Naive thymus-derived CD4-positive, alpha-beta T cell (primary cell): ENCODE measurements at regions of chr16 and their contacts with region 1.

Region 1: DNA sequence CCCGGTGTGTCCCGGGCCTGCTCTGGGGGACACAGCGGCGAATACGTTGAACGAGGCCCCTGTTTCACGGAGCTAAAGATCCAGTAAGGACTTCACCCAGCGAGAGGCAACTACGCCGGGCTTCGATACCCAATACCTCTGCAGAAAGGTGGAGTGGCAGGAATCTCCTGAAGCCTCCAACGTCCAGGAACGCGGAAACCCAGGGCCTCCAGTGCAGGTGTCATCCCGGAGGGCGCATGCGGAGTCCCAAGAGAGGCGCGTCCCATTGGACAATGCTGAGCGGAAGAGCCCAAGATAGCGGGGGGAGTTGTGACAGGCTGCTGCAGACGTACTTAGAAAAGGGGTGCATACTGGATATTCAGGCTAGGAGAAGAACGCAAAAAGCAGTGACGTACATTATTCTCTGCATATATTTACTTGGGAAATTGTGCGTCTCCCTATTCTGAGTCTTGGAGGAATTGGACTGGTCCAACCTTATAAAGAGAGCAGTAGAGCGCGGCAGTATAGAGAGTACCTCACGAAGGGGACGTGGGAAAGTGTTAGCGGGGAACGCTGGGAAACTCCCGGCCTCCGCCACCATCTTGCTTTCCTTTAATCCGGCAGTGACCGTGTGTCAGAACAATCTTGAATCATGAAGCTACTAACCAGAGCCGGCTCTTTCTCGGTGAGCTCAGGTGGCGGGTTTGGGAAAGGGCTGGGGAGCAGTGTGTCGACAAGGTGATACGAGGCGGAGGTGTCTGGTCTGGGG is at the start of gene UQCRC2:
- DNase-seq: peak; percentile 76 to 92 (median 89)
- ATAC-seq: peak; percentile 94
- H3K4me3 ChIP-seq: peak within 1 kb of the TSS; percentile 81
- H3K4me3 Mint-ChIP-seq: peak within 1 kb of the TSS; percentile 94 to 100 (median 99)
- H3K27ac ChIP-seq: peak within 1 kb of the TSS; percentile 97
- H3K27ac Mint-ChIP-seq: peak within 1 kb of the TSS; percentile 96 to 99 (median 98)
- H3K4me1 ChIP-seq: peaks cover 30 to 33% of the 10 kb centered on the region in 2 donors
- H3K4me1 Mint-ChIP-seq: peaks cover 34 to 86% (median 68%) of the 10 kb centered on the region in 7 donors
- H3K27me3 ChIP-seq: no peaks in the 10 kb centered on the region
- H3K27me3 Mint-ChIP-seq: no peaks in the 10 kb centered on the region
- total RNA-seq, gene UQCRC2: 158 to 227 (median 180) TPM

Region 2: GRCh38 chr16:21523411-21524067 is 429.4 kb before region 1 on chr16:
- CTCF ChIA-PET with region 1: no interaction called
- POLR2A ChIA-PET with region 1: no interaction called
- intact Hi-C with region 1: loop called in 1 of 2 experiments (anchors 1 kb)
- DNase-seq: no peak
- ATAC-seq: no peak
- H3K4me3 ChIP-seq: no peak overlapping the region
- H3K4me3 Mint-ChIP-seq: peak overlapping the region in 2 of 10 donors; percentile 29 to 56
- H3K27ac ChIP-seq: no peak overlapping the region
- H3K27ac Mint-ChIP-seq: no peak overlapping the region
- H3K4me1 ChIP-seq: no peaks in the 10 kb centered on the region
- H3K4me1 Mint-ChIP-seq: peaks cover 2 to 9% (median 6%) of the 10 kb centered on the region in 7 donors
- H3K27me3 ChIP-seq: no peaks in the 10 kb centered on the region
- H3K27me3 Mint-ChIP-seq: peaks cover 0 to 7% (median 0%) of the 10 kb centered on the region in 5 donors

Region 3: DNA sequence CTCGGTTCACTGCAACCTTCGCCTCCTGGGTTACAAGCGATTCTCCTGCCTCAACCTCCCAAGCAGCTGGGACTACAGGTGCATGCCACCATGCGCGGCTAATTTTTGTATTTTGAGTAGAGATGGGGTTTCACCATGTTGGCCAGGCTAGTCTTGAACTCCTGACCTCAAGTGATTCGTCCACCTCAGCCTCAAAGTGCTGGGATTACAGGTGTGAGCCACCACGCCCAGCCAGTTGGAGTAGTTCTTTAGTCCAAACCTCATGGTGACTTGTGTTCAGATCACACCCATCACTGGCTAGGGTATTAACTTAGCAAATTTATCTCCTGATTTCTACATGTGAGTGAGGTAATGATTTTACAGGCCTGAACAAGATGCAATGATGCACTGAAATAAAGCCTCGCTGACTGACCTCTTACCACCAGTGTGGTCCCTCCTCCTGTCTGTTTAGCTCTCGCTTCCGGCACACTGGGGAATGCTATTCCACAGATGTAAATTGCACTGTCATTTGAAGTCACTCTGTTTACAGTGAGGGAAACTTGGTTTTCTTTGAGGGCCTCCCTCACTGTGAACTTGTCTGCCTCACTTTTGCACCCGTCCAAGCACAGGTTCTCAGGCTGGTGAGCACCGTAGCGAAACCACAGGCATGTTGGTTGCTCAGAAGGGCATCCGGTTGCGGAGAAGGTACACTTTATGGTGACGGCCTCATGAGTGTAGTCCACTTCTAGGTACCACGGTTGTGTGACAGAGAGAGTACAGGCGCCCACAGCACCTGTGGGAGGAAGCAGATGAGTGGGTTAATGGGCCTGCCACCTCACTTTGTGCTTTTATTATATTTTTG is 306.0 kb before region 1 on chr16:
- CTCF ChIA-PET with region 1: no interaction called
- POLR2A ChIA-PET with region 1: no interaction called
- intact Hi-C with region 1: loop called in 1 of 2 experiments (anchors 1 kb)
- DNase-seq: peak in 8 of 9 donors; percentile 66 to 79 (median 71)
- ATAC-seq: peak; percentile 83
- H3K4me3 ChIP-seq: peak overlapping the region; percentile 57
- H3K4me3 Mint-ChIP-seq: peak overlapping the region; percentile 69 to 90 (median 81)
- H3K27ac ChIP-seq: peak overlapping the region; percentile 77
- H3K27ac Mint-ChIP-seq: peak overlapping the region; percentile 91 to 97 (median 95)
- H3K4me1 ChIP-seq: peaks cover 43 to 50% of the 10 kb centered on the region in 2 donors
- H3K4me1 Mint-ChIP-seq: peaks cover 26 to 69% (median 56%) of the 10 kb centered on the region in 7 donors
- H3K27me3 ChIP-seq: no peaks in the 10 kb centered on the region
- H3K27me3 Mint-ChIP-seq: no peaks in the 10 kb centered on the region

Region 4: DNA sequence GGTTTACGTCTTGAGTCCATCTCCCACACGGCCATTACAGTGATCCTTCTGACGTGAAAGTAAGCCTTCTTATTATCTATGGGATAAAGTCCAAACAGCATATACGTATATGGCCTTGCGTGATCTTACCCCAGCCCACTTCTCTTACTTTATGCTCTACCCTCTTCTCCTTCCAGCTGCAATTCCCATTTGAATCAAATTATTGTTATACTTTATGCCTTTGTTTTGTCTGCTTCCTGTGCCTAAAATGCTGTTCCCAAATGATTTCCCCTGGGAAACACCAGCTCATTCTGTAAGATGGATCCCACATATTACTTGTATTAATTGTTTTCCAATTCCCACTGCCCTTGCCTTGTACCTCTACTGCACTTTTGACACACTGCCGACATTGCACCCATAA is 11.4 kb after region 1 on chr16:
- CTCF ChIA-PET with region 1: no interaction called
- POLR2A ChIA-PET with region 1: interaction called, 12 read pairs
- intact Hi-C with region 1: no loop called
- DNase-seq: no peak
- ATAC-seq: no peak
- H3K4me3 ChIP-seq: no peak overlapping the region
- H3K4me3 Mint-ChIP-seq: no peak overlapping the region
- H3K27ac ChIP-seq: no peak overlapping the region
- H3K27ac Mint-ChIP-seq: peak overlapping the region in 1 of 9 donors; percentile 20
- H3K4me1 ChIP-seq: no peaks in the 10 kb centered on the region
- H3K4me1 Mint-ChIP-seq: peaks cover 0 to 6% (median 1%) of the 10 kb centered on the region in 7 donors
- H3K27me3 ChIP-seq: no peaks in the 10 kb centered on the region
- H3K27me3 Mint-ChIP-seq: no peaks in the 10 kb centered on the region

Region 5: GRCh38 chr16:22014271-22014873 is 61.4 kb after region 1 on chr16:
- CTCF ChIA-PET with region 1: no interaction called
- POLR2A ChIA-PET with region 1: no interaction called
- intact Hi-C with region 1: no loop called
- DNase-seq: no peak
- ATAC-seq: no peak
- H3K4me3 ChIP-seq: no peak overlapping the region
- H3K4me3 Mint-ChIP-seq: no peak overlapping the region
- H3K27ac ChIP-seq: no peak overlapping the region
- H3K27ac Mint-ChIP-seq: peak overlapping the region in 1 of 9 donors; percentile 16
- H3K4me1 ChIP-seq: peaks cover 0 to 10% of the 10 kb centered on the region in 2 donors
- H3K4me1 Mint-ChIP-seq: peaks cover 30 to 92% (median 79%) of the 10 kb centered on the region in 7 donors
- H3K27me3 ChIP-seq: no peaks in the 10 kb centered on the region
- H3K27me3 Mint-ChIP-seq: no peaks in the 10 kb centered on the region

Region 6: GRCh38 chr16:22077700-22078313 is 124.8 kb after region 1 on chr16:
- CTCF ChIA-PET with region 1: interaction called, 4 read pairs
- POLR2A ChIA-PET with region 1: no interaction called
- intact Hi-C with region 1: loop called in 1 of 2 experiments (anchors 5 kb)
- DNase-seq: peak; percentile 43 to 73 (median 69)
- ATAC-seq: peak; percentile 87
- H3K4me3 ChIP-seq: no peak overlapping the region
- H3K4me3 Mint-ChIP-seq: no peak overlapping the region
- H3K27ac ChIP-seq: no peak overlapping the region
- H3K27ac Mint-ChIP-seq: peak overlapping the region in 1 of 9 donors; percentile 41
- H3K4me1 ChIP-seq: no peaks in the 10 kb centered on the region
- H3K4me1 Mint-ChIP-seq: peaks cover 0 to 5% (median 2%) of the 10 kb centered on the region in 7 donors
- H3K27me3 ChIP-seq: no peaks in the 10 kb centered on the region
- H3K27me3 Mint-ChIP-seq: no peaks in the 10 kb centered on the region